ENCODE measurements at regions of chr10 and their contacts with region 1.

Region 1: DNA sequence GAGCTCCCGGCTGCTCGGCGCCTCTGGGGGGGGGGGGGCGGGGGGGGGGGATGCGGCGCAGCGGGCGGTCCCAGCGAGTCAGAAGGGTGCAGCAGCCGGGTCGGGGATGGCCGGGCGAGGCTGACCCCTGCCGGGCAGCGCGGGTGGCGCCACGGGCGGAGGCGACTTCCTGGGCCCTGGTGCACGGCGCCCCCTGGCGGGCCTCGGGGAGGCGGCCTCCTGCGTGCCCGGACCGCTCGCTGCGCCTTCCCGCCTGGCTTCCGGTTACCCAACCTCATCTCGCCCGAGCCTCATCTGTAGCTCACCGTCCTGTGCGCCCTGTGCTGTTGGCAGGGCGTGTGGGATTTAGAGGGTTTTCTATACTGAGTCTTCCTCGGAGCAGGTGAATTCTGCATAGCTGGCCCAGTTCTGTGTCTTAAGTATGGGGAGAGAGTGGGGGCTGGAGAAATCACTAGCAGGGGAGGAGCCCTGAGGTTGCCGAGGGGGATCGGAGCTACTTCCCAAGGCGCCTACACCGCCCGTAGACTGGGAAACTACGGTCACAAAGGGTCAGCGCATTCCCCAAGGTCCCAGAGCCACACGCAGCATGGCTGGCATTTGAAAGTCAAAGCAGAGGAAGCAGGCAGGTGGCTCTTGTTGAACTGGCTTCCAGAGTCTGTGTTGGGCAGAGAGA is 28.3 kb upstream of the WDFY4 start:
- DNase-seq: peak; percentile 97
- H3K4me3 Mint-ChIP-seq: peak overlapping the region; percentile 86
- H3K27ac Mint-ChIP-seq: peak overlapping the region; percentile 66
- H3K4me1 Mint-ChIP-seq: peaks cover 4% of the 10 kb centered on the region
- H3K27me3 Mint-ChIP-seq: peaks cover 36% of the 10 kb centered on the region

Region 2: GRCh38 chr10:48306265-48306869 is 350.0 kb before region 1 on chr10 and contains the start of gene MAPK8:
- intact Hi-C with region 1: loop called (anchors 5 kb)
- DNase-seq: peak; percentile 97
- H3K4me3 Mint-ChIP-seq: peak within 1 kb of the TSS; percentile 82
- H3K27ac Mint-ChIP-seq: peak within 1 kb of the TSS; percentile 83
- H3K4me1 Mint-ChIP-seq: peaks cover 24% of the 10 kb centered on the region
- H3K27me3 Mint-ChIP-seq: peaks cover 2% of the 10 kb centered on the region
- total RNA-seq, gene MAPK8: 46.2 and 46.4 TPM in 2 replicates

Region 3: GRCh38 chr10:48551861-48552591 is 104.4 kb before region 1 on chr10:
- intact Hi-C with region 1: loop called (anchors 1 kb)
- DNase-seq: no peak
- H3K4me3 Mint-ChIP-seq: no peak overlapping the region
- H3K27ac Mint-ChIP-seq: no peak overlapping the region
- H3K4me1 Mint-ChIP-seq: no peaks in the 10 kb centered on the region
- H3K27me3 Mint-ChIP-seq: no peaks in the 10 kb centered on the region

Region 4: GRCh38 chr10:48623607-48624132 is 32.7 kb before region 1 on chr10:
- intact Hi-C with region 1: no loop called
- DNase-seq: peak; percentile 41
- H3K4me3 Mint-ChIP-seq: no peak overlapping the region
- H3K27ac Mint-ChIP-seq: no peak overlapping the region
- H3K4me1 Mint-ChIP-seq: no peaks in the 10 kb centered on the region
- H3K27me3 Mint-ChIP-seq: peaks cover 17% of the 10 kb centered on the region

Region 5: GRCh38 chr10:48736596-48736995 is 80.2 kb after region 1 on chr10:
- intact Hi-C with region 1: no loop called
- DNase-seq: no peak
- H3K4me3 Mint-ChIP-seq: no peak overlapping the region
- H3K27ac Mint-ChIP-seq: no peak overlapping the region
- H3K4me1 Mint-ChIP-seq: no peaks in the 10 kb centered on the region
- H3K27me3 Mint-ChIP-seq: no peaks in the 10 kb centered on the region

Region 6: DNA sequence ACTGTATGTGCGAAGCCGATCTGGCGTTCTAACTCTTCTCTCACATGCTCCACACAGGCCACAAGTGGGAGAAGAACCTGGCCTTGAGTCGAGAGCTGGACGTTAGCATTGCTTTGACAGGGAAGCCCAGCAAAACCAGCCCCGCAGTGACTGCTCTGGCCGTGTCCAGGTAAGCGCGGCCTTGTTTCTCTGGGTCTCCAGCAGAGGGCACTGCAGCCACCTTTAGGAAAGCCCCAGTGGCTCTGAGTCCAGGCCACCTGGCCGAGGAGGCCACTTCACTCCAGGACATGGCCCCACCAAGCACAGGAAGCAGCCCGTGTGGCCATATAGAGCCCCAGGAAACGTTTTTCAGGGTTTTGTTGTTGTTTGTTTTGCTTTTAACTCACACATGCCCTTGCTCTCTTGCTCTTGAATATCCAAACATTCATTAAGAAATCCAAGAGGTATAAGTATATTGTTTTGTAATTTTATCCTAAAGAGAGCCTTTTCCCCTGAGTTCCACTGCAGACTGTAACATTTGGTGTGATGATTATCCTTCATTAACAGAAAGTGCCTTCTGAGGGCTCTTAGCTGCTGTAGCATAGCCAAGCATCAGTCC is 325.0 kb after region 1 on chr10:
- intact Hi-C with region 1: loop called (anchors 2 kb)
- DNase-seq: peak; percentile 80
- H3K4me3 Mint-ChIP-seq: no peak overlapping the region
- H3K27ac Mint-ChIP-seq: no peak overlapping the region
- H3K4me1 Mint-ChIP-seq: no peaks in the 10 kb centered on the region
- H3K27me3 Mint-ChIP-seq: no peaks in the 10 kb centered on the region

Region 7: DNA sequence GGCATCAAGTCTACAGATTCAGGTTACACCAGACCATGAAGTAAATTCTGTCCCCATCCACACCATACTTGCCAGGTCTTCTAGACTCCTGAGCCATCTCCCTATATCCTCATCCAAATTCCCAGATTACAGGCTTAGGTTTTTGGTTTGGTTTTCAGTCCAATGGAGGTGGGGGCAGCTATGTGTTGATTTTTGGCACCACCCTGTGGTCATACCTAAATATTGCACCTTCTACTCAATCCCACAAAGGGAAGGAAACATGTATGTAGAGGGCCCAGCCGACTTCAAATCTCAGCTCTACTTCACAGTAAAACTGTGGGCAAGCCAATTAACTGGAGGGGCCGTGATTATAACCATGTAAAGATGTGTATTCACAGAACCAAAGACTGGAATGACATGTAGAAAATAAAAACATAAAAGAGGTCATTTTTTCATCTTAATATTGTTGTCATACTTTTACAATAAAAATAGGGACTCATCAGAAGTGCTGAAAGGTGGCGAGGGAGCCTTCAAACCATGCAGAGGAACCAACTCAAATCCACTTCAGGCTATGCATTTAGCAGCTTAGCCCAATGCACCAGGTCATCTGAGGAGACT is 862.7 kb after region 1 on chr10:
- intact Hi-C with region 1: loop called (anchors 2 kb)
- DNase-seq: peak; percentile 80
- H3K4me3 Mint-ChIP-seq: no peak overlapping the region
- H3K27ac Mint-ChIP-seq: no peak overlapping the region
- H3K4me1 Mint-ChIP-seq: no peaks in the 10 kb centered on the region
- H3K27me3 Mint-ChIP-seq: no peaks in the 10 kb centered on the region

Measured in activated CD4-positive, alpha-beta T cell treated with anti-CD3 and anti-CD28 coated beads, Interleukin-2, amount 10 ng/mL, durations not matched to agents 24 days and 14 days (primary cell).